ENCODE measurements at regions of chr11 and their contacts with region 1.

Region 1: GRCh38 chr11:59158206-59159068 is 13.5 kb upstream of the DTX4 start:
- DNase-seq: no peak
- H3K4me3 ChIP-seq: no peak overlapping the region
- H3K27ac ChIP-seq: no peak overlapping the region
- H3K4me1 ChIP-seq: peaks cover 3% of the 10 kb centered on the region
- H3K27me3 ChIP-seq: no peaks in the 10 kb centered on the region
- CTCF ChIP-seq: peak; percentile 35 to 79 (median 66)
- POLR2A ChIP-seq: no peak

Region 2: GRCh38 chr11:58654079-58654907 is 504.1 kb before region 1 on chr11:
- intact Hi-C with region 1: loop called (anchors 10 kb)
- DNase-seq: no peak
- H3K4me3 ChIP-seq: no peak overlapping the region
- H3K27ac ChIP-seq: no peak overlapping the region
- H3K4me1 ChIP-seq: no peaks in the 10 kb centered on the region
- H3K27me3 ChIP-seq: no peaks in the 10 kb centered on the region
- CTCF ChIP-seq: peak; percentile 54 to 65 (median 58)
- POLR2A ChIP-seq: no peak

Region 3: GRCh38 chr11:59011655-59012397 is 146.6 kb before region 1 on chr11:
- intact Hi-C with region 1: no loop called
- DNase-seq: no peak
- H3K4me3 ChIP-seq: no peak overlapping the region
- H3K27ac ChIP-seq: no peak overlapping the region
- H3K4me1 ChIP-seq: no peaks in the 10 kb centered on the region
- H3K27me3 ChIP-seq: no peaks in the 10 kb centered on the region
- CTCF ChIP-seq: no peak
- POLR2A ChIP-seq: no peak

Region 4: GRCh38 chr11:59097113-59097708 is 61.2 kb before region 1 on chr11:
- intact Hi-C with region 1: loop called (anchors 2 kb)
- DNase-seq: no peak
- H3K4me3 ChIP-seq: no peak overlapping the region
- H3K27ac ChIP-seq: no peak overlapping the region
- H3K4me1 ChIP-seq: no peaks in the 10 kb centered on the region
- H3K27me3 ChIP-seq: no peaks in the 10 kb centered on the region
- CTCF ChIP-seq: peak in 2 of 3 experiments; percentile 24 to 46
- POLR2A ChIP-seq: no peak

Region 5: DNA sequence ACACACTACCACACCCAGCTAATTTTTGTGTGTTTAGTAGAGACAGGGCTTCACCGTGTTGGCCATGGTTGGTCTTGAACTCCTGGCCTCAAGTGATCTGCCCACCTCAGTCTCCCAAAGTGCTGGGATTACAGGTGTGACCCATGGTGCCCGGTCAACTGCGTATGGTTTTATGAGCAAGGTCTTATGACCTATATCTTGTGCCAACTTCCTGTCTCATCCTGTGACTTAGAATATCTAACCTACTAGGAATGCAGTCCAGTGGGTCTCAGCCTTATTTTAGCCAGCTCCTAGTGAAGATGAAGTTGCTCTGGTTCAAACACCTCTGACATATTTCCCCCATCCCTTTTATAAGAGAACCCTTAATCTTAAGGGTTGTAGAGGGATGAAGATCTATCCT is 134.2 kb after region 1 on chr11:
- intact Hi-C with region 1: no loop called
- DNase-seq: no peak
- H3K4me3 ChIP-seq: no peak overlapping the region
- H3K27ac ChIP-seq: no peak overlapping the region
- H3K4me1 ChIP-seq: no peaks in the 10 kb centered on the region
- H3K27me3 ChIP-seq: no peaks in the 10 kb centered on the region
- CTCF ChIP-seq: no peak
- POLR2A ChIP-seq: no peak

Region 6: DNA sequence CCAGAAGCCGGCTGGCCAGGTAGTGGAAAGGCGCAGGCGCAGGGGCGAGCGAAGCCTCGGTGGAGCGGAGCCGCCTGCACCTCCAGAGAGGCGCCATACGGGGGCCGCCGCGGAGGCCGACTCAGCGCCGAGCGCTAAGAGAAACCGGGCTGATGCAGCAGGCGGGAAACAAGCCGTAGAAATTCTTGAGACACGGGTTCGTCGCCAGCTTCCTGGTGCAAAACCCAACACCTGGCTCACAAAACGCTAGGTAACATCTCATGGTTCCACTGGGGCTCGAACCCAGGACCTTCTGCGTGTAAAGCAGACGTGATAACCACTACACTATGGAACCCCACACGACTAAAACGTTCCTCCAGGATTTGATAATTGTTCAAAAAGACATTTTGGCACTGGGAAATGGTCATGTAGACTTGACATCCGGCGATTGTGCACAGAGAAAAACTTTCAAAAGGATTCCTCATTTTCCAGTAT is 392.0 kb after region 1 on chr11:
- intact Hi-C with region 1: no loop called
- DNase-seq: peak in 1 of 2 donors; percentile 92
- H3K4me3 ChIP-seq: peak overlapping the region; percentile 52 to 60
- H3K27ac ChIP-seq: peak overlapping the region; percentile 91
- H3K4me1 ChIP-seq: no peaks in the 10 kb centered on the region
- H3K27me3 ChIP-seq: no peaks in the 10 kb centered on the region
- CTCF ChIP-seq: peak in 1 of 3 experiments; percentile 53
- POLR2A ChIP-seq: peak in 1 of 2 donors; percentile 10

Measured in vagina (tissue), 2 donors.